ENCODE measurements at regions of chr16 and their contacts with region 1.

Region 1: GRCh38 chr16:11977376-11978041 is 975 bp downstream of the SNX29 start:
- DNase-seq: peak in 4 of 10 donors; percentile 11 to 55 (median 33)
- H3K4me3 ChIP-seq: peak overlapping the region; percentile 67 to 100 (median 95)
- H3K27ac ChIP-seq: peak overlapping the region in 45 of 59 donors; percentile 4 to 94 (median 82)
- H3K27me3 ChIP-seq: no peaks in the 10 kb centered on the region
- CTCF ChIP-seq: no peak

Region 2: DNA sequence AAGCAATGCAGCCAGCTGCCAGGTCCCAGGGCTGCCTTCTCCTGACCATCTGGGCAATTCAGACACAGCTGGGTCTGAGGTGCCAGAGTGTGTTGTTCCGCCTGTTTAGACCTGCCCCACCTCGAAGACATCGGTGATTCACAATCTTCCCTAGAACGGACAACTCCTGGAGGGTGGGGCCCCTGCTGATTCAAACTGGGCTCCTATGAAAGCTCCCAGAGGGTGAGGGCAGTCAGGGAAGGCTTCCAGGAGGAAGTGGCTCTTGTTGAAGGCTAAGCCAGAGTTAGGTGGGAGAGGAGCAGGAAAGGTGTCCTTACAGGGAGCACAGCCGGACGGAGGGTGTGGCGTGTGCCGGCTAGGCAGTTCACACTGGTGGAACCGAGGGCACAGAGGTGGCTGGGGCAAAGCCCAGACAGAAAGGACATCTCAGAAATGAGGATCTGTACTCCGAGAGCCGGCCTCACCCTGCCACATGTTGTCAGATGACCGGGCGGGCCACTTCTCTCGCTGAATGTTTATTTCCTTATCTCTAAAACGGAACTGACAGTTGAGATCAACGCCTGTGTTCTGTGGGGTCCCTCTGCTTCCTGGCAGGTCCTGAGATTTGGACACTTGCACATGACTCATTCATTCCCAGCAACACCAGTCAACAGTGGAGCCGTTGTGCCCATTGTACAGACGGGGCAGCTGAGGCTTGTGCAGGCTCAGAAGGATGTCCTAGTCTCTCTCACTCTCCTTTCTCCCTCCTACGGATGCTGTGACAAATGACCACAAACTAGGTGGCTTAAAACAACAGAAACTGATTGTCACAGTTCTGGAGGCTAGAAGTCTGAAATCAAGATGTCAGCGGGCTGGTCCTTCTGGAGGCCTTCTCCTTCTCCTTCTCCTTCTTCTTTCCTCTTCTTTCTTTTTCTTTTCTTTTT is 363.9 kb before region 1 on chr16:
- intact Hi-C with region 1: no loop called
- DNase-seq: peak in 3 of 10 donors; percentile 25 to 53 (median 47)
- H3K4me3 ChIP-seq: no peak overlapping the region
- H3K27ac ChIP-seq: peak overlapping the region in 11 of 59 donors; percentile 4 to 63 (median 44)
- H3K27me3 ChIP-seq: no peaks in the 10 kb centered on the region
- CTCF ChIP-seq: no peak

Region 3: DNA sequence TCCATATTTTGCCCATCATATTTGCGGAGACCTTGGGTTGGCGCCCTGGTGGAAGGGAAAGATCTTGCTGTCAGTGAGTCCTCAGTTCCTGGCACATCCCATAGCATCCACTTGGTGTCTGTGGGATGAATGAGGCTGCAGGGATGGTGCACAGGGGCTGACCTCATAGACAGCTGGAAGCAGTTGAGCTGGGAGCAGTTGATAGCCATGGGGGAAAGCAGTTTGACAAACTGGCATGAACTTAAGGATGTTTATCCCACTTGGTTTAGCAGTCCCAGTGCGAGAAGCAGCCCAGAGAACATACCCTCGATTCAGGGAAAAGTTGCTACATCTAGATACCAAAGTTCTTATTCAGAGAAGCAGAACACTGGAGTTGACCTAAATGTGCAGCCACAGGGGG is 79.8 kb after region 1 on chr16:
- intact Hi-C with region 1: loop called (anchors 5 to 10 kb)
- DNase-seq: peak in 2 of 10 donors; percentile 22 to 59
- H3K4me3 ChIP-seq: peak overlapping the region in 2 of 59 donors; percentile 0 to 18
- H3K27ac ChIP-seq: peak overlapping the region in 24 of 59 donors; percentile 3 to 72 (median 44)
- H3K27me3 ChIP-seq: no peaks in the 10 kb centered on the region
- CTCF ChIP-seq: peak in 5 of 56 donors; percentile 6 to 40 (median 13)

Region 4: GRCh38 chr16:12067714-12068401 is 90.3 kb after region 1 on chr16:
- intact Hi-C with region 1: loop called in 1 of 2 experiments (anchors 10 kb)
- DNase-seq: peak in 6 of 10 donors; percentile 19 to 79 (median 64)
- H3K4me3 ChIP-seq: no peak overlapping the region
- H3K27ac ChIP-seq: peak overlapping the region in 6 of 59 donors; percentile 3 to 40 (median 28)
- H3K27me3 ChIP-seq: no peaks in the 10 kb centered on the region
- CTCF ChIP-seq: peak; percentile 69 to 99 (median 95)

Region 5: DNA sequence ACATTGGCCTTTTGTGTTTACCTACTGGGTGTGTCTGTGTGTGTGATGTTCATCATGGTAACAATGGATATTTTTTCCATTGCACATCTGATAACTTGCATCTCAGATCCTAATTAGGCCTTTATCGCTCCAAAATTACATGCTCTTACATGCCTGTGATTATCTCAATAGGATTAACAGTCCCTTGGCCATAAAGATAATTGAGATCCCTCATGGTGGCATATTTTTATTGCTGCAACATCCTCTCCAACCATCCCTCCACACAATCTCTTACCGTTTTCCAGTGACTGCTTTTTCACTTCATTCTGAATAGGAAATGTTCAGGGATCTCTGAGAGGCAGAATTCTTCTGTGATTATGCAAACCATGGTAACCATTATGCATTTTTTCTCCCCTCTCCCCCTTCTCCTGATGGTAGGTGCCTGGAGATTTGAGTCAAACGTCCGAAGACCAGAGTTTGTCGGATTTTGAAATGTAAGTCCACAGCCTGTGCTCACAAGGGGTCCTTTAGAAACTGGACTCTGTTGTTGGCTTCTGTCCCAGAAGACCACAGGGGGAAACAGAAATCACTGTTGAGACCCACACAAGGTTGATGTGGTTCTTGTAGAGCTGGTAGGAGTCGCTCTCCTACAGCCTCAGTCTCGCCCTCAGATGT is 420.6 kb after region 1 on chr16:
- intact Hi-C with region 1: no loop called
- DNase-seq: no peak
- H3K4me3 ChIP-seq: no peak overlapping the region
- H3K27ac ChIP-seq: peak overlapping the region in 2 of 59 donors; percentile 10 to 27
- H3K27me3 ChIP-seq: no peaks in the 10 kb centered on the region
- CTCF ChIP-seq: no peak

Region 6: DNA sequence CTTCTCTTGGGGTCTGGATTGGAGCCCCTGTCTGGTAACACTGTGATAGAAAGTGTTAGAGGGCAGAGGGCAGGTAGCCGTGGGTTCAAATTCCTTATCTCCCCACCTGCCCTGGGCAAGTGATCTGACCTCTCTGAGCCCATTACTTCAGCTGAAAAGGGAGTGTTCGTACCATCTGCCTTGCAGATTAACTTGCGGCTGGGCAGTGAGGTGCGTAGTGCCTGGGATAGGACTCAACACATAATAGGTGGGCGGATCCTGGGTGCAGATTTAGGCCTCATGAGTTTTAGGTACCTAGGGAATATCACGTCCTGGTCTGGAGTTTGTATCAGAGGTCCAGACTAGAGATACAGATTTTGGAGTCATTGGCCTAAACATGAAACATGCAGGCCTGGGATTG is 496.5 kb after region 1 on chr16:
- intact Hi-C with region 1: no loop called
- DNase-seq: no peak
- H3K4me3 ChIP-seq: no peak overlapping the region
- H3K27ac ChIP-seq: no peak overlapping the region
- H3K27me3 ChIP-seq: no peaks in the 10 kb centered on the region
- CTCF ChIP-seq: no peak

Measured in dorsolateral prefrontal cortex (tissue), 120 donors.